Activated naive CD4-positive, alpha-beta T cell treated with anti-CD3 and anti-CD28 coated beads for 36 hours (primary cell): ENCODE measurements at regions of chr6 and their contacts with region 1.

Region 1: DNA sequence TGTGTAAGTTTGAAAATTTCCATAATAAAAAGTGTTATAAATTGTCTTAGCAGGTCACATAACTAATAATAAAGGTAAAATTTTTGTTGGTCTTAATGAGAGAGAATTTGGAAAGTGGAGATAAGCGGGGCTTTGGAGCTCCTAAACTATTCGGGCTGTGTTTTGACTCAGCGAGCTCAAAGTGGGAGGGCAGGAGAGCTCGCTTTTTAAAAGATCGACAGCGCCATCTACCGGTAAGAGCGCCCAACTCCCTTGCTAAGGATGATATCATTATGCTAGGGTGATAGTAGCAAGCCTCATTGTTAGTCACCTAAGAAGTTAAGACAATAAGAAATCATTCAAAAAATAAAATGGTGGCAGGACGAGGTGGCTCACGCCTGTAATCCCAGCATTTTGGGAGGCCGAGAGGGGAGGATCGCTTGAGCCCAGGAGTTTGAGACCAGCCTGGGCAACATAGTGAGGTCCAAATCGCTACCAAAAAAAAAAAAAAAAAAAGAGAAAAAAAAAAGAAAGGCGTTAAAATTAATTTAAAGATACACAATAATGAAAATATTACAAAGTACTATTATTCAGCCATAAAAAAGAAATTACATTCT is 24.8 kb downstream of the C6orf15 start:
- DNase-seq: peak; percentile 95
- H3K4me3 Mint-ChIP-seq: no peak overlapping the region
- H3K27ac Mint-ChIP-seq: no peak overlapping the region
- H3K4me1 Mint-ChIP-seq: peaks cover 10% of the 10 kb centered on the region
- H3K27me3 Mint-ChIP-seq: no peaks in the 10 kb centered on the region

Region 2: DNA sequence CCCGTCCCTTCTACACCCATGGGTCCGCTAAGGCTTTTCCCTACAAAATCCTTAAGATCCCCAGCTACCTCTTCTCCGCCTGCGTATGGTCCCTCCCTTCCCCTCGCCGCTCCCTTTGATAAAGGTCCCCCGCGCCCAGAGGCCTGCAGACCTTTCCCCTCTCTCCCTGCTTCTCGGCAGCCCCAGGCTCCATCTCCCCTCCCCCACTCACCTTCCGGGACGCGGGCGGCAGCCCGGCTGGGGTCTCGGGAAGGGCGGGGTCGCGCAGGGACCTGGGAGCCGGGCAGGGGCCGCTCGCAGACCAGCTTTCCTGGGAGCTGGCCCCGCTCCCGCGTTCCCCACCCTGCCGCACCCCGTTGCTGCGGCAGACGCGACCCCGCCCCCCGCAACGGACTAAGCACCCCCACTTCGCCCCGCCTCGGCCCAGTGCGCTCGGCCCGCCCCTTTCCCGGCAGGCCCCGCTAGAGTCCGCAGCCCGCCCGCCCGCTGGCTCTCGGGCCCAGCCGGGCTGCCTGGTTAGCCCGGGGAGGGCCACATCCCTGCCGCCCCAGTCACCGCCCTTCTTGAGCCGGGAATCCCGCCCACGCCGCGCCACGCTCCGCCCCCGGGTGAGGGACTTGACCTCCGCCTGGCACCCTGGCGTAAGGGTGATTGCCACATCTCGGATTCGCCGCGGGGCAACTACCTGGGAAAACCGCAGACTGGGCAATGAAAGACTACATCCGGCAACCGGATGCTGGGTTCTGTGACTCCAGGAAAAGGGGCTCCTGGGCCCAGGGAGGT is 345.1 kb before region 1 on chr6 and contains the start of gene FLOT1:
- CTCF ChIA-PET with region 1: interaction called, 3 read pairs
- intact Hi-C with region 1: loop called (anchors 5 kb)
- DNase-seq: peak; percentile 96
- H3K4me3 Mint-ChIP-seq: peak within 1 kb of the TSS; percentile 94
- H3K27ac Mint-ChIP-seq: peak within 1 kb of the TSS; percentile 96
- H3K4me1 Mint-ChIP-seq: peaks cover 61% of the 10 kb centered on the region
- H3K27me3 Mint-ChIP-seq: no peaks in the 10 kb centered on the region
- total RNA-seq, gene FLOT1: 162 to 173 TPM

Region 3: GRCh38 chr6:30800871-30801270 is 286.7 kb before region 1 on chr6:
- CTCF ChIA-PET with region 1: no interaction called
- intact Hi-C with region 1: no loop called
- DNase-seq: no peak
- H3K4me3 Mint-ChIP-seq: no peak overlapping the region
- H3K27ac Mint-ChIP-seq: no peak overlapping the region
- H3K4me1 Mint-ChIP-seq: peaks cover 20% of the 10 kb centered on the region
- H3K27me3 Mint-ChIP-seq: no peaks in the 10 kb centered on the region

Region 4: GRCh38 chr6:30914076-30914853 is 173.3 kb before region 1 on chr6 and contains the start of gene VARS2:
- CTCF ChIA-PET with region 1: interaction called, 73 read pairs
- intact Hi-C with region 1: loop called (anchors 1 kb)
- DNase-seq: peak; percentile 90
- H3K4me3 Mint-ChIP-seq: peak within 1 kb of the TSS; percentile 87
- H3K27ac Mint-ChIP-seq: peak within 1 kb of the TSS; percentile 86
- H3K4me1 Mint-ChIP-seq: peaks cover 28% of the 10 kb centered on the region
- H3K27me3 Mint-ChIP-seq: no peaks in the 10 kb centered on the region
- total RNA-seq, gene VARS2: 78.1 to 82.8 TPM

Region 5: DNA sequence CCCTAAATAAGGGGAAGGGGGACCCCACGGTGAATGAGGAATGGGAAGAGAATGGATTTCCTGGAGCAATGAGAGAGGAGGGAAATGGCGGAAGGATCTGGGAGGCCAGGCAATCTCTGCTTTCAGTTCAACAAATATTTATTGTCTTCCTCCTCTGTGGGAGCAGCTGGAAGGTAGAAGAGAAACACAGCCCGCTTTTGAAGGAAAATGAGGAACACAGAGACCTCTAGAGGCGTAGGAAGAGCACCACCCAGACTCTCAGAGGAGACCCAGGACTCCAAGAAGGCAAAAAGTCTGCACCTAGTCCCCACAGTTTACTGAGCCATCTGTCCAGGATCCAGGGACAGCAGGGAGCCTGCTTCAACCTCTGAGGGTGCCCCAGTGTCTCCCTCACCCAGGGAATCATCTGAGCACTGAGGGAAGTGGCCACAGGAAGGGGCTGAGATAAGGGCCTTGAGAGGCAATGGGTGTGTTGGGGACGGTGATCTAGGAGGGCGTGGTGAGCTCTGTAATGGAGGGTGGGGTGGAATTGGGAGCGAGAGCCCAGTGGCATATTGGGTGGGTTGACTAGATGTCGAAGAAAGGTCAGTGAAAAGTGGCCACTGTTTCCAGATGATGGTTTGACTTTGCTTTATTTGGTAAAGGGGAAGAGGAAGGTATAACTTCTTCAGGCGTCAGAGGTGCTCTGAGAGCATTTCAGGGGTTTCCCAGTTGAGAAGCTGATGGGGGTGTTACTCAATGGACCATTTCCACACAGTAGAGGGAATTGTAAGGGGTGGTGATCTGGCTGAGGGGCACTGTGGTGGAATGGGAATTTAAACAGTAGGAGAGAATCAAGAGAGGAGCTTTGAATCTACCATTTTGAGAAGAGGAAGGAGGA is 27.6 kb after region 1 on chr6:
- CTCF ChIA-PET with region 1: interaction called, 8 read pairs
- intact Hi-C with region 1: loop called (anchors 1 kb)
- DNase-seq: no peak
- H3K4me3 Mint-ChIP-seq: no peak overlapping the region
- H3K27ac Mint-ChIP-seq: no peak overlapping the region
- H3K4me1 Mint-ChIP-seq: peaks cover 5% of the 10 kb centered on the region
- H3K27me3 Mint-ChIP-seq: no peaks in the 10 kb centered on the region